RWPE1 (cell line): ENCODE measurements at regions of chr11 and their contacts with region 1.

Region 1: DNA sequence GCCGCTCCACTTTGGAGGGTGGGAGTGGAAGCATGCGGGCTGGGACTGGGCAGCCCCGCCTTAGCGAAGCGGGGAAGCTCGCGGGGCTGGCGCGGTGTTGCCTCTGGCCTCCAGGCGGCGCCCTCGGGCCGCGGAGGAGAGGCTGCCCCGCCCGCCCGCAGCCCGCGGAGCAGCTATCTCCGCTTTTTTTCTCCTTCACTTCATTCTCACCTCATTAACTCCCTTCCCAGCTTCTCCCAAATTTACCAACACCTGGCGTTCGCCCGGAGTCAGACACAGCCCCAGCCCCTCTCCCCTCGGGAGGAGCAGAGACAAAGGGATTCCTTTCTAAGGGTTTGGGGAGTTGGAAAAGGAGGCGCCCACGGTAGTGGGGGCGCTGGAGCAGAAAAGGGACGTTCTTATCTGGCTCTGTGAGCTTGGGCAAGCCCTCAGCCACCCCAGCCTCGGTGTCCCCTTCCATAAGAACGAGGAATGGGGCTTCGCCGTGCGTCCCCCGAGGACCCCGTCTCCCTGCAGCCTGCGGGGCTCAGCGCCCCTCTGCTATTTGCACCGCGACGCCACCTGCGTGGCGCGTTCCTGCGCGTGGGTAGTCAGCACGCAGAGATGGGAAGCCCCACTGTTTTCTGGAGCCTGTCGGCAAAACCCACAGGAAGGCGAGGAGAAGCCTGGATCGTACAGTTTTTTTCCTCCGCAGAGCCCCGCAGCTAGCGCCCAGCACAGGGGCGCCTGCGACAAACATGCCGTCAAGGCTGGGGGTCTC is 1.5 kb upstream of the WNT11 start:
- DNase-seq: peak; percentile 84
- H3K27ac ChIP-seq: no peak overlapping the region
- CTCF ChIP-seq: peak; percentile 97

Region 2: DNA sequence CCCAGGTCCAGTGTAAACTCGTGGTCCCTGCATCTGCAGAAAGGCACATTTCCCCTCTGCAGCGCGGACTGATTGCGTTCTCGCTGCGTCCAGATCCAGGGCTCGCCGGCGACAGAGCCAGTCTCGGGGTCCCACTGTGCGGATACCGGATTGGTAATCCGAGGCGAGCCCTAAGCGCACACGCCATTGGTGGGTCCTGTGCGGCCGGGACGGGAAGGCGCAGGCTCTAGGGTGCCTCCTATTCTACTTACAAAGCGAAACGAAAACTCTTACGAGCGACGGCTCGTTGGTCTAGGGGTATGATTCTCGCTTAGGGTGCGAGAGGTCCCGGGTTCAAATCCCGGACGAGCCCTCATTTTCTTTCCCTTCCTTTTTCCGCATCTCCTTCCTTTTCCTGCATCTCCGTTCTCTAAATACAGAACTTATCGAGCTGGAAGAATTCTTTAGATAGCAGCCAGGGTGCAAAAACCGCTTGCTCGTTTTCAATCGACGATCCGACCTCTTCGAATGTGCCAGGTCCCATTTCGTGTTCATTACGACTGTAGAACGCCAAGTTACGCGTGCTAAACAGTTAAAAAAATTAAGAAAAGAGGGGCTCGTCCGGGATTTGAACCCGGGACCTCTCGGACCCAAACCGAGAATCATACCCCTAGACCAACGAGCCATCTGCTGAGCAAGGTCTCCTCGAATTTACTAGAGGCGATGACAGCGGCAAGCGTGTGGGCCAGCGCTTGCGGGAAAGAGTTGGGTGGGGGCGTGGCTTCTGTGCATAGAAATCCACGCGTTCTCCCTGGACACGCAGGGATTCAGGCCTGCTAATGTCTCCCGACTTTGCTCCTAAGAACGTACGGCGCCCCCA is 27.6 kb after region 1 on chr11:
- CTCF ChIA-PET with region 1: interaction called, 24 read pairs
- POLR2A ChIA-PET with region 1: no interaction called
- DNase-seq: peak; percentile 90
- H3K27ac ChIP-seq: peak overlapping the region; percentile 76
- CTCF ChIP-seq: no peak

Region 3: DNA sequence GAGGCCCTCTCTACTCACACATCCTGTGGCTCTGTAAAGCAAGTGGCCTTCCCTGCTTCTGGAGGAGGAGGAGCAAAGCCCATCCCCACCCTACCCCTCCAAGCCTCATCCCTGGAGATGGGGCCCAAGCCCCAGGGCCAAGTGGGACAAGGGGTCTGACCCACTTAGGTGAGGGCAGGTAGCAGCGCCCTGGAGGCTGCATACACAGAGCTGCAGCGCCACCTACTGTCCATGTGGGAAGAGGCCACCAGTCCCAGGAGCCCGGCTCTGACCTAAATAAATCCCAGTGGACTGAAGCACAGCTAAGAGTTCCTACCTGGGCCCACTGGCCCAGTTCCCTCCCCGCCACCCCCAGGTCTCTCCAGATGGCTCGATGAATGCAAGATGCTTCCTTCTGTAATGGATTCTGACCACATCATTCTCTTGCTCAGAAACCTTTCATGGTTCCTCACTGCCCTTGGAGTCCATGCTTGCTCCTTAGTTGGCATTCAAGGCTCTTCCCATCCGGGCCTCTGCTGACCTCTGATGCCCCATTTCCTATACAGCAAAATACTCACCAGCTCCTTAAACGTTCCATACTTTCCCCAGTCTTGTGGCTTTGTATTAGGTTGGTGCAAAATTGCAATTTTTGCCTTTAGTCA is 111.0 kb after region 1 on chr11:
- CTCF ChIA-PET with region 1: interaction called, 87 read pairs
- POLR2A ChIA-PET with region 1: no interaction called
- DNase-seq: peak; percentile 80
- H3K27ac ChIP-seq: no peak overlapping the region
- CTCF ChIP-seq: peak; percentile 87